HEK293 (cell line): ENCODE measurements at regions of chr19 and their contacts with region 1.

Region 1: GRCh38 chr19:13093407-13094105 is 9.1 kb downstream of the LYL1 start:
- H3K4me3 ChIP-seq: no peak overlapping the region
- H3K27ac ChIP-seq: no peak overlapping the region
- H3K4me1 ChIP-seq: no peaks in the 10 kb centered on the region
- CTCF ChIP-seq: peak; percentile 95

Region 2: GRCh38 chr19:12983542-12984142 is 109.9 kb before region 1 on chr19:
- CTCF ChIA-PET with region 1: interaction called, 274 read pairs
- POLR2A ChIA-PET with region 1: interaction called, 3 read pairs
- H3K4me3 ChIP-seq: peak overlapping the region; percentile 16
- H3K27ac ChIP-seq: no peak overlapping the region
- H3K4me1 ChIP-seq: no peaks in the 10 kb centered on the region
- CTCF ChIP-seq: peak; percentile 96

Region 3: DNA sequence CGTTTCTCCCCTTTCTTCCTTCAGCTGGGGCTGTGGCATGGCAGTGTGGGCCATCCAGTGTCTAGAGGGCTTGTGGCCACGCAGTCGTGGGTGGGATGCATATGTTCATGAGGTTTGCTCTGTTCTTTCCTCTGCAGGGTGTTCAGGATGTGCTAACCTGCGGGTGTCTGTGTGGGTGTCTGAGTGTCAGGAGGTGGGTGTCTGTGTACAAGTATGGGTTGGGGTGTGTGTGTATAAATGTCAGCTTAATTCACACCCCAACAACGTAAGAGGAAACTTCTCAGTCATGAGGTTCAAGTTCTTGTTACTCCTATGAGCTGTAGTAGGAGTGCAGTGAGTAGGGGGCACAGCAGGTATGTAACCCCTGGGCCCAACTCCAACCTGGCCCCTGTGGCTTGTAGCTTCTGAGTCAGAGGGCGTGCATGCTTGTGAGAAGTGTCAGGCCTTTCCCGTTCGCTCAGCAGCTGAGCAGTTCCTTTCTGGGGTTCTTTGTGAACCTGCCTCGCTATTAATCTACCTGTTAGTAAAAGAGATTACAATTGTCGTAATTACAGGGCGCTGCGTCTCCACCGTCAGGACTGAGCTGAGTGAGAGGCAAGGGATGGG is 49.2 kb before region 1 on chr19:
- CTCF ChIA-PET with region 1: interaction called, 15 read pairs
- POLR2A ChIA-PET with region 1: no interaction called
- H3K4me3 ChIP-seq: no peak overlapping the region
- H3K27ac ChIP-seq: no peak overlapping the region
- H3K4me1 ChIP-seq: no peaks in the 10 kb centered on the region
- CTCF ChIP-seq: no peak

Region 4: GRCh38 chr19:13051267-13052165 is 42.0 kb before region 1 on chr19:
- CTCF ChIA-PET with region 1: interaction called, 14 read pairs
- POLR2A ChIA-PET with region 1: interaction called, 3 read pairs
- H3K4me3 ChIP-seq: peak overlapping the region; percentile 6; the same call in 1 of the 2 replicates
- H3K27ac ChIP-seq: no peak overlapping the region; the same call in 1 of the 2 replicates
- H3K4me1 ChIP-seq: peaks cover 32% of the 10 kb centered on the region
- CTCF ChIP-seq: no peak

Region 5: GRCh38 chr19:13082192-13083007 is 11.2 kb before region 1 on chr19:
- CTCF ChIA-PET with region 1: interaction called, 14 read pairs
- POLR2A ChIA-PET with region 1: no interaction called
- H3K4me3 ChIP-seq: no peak overlapping the region
- H3K27ac ChIP-seq: no peak overlapping the region
- H3K4me1 ChIP-seq: peaks cover 14% of the 10 kb centered on the region
- CTCF ChIP-seq: peak; percentile 18; the same call in 1 of the 2 replicates

Region 6: GRCh38 chr19:13134626-13135025 is 41.1 kb after region 1 on chr19:
- CTCF ChIA-PET with region 1: no interaction called
- POLR2A ChIA-PET with region 1: no interaction called
- H3K4me3 ChIP-seq: no peak overlapping the region
- H3K27ac ChIP-seq: no peak overlapping the region
- H3K4me1 ChIP-seq: no peaks in the 10 kb centered on the region
- CTCF ChIP-seq: no peak

Region 7: GRCh38 chr19:13277104-13277809 is 183.7 kb after region 1 on chr19:
- CTCF ChIA-PET with region 1: interaction called, 10 read pairs
- POLR2A ChIA-PET with region 1: no interaction called
- H3K4me3 ChIP-seq: no peak overlapping the region
- H3K27ac ChIP-seq: no peak overlapping the region
- H3K4me1 ChIP-seq: no peaks in the 10 kb centered on the region
- CTCF ChIP-seq: peak; percentile 54